ENCODE measurements at regions of chr1 and their contacts with region 1.

Region 1: GRCh38 chr1:151340870-151341754 is 5.9 kb downstream of the RFX5 start:
- DNase-seq: peak; percentile 62
- CTCF ChIP-seq: peak; percentile 64

Region 2: DNA sequence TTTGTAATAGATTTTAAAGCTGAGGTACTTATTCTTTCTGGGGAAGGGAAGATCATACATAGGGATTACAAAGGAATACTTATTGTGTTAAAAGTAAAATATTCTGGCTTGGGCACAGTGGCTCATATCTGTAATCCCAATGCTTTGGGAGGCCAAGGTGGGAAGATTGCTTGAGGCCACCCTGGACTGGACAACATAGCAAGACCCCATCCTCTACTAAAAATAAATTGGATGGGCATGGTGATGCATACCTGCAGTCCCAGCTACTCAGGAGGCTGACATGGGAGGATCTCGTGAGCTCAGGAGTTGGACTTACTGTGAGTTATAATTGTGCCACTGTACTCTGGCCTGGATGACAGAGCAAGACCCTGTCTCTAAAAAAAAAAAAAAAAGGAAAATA is 243.0 kb before region 1 on chr1:
- CTCF ChIA-PET with region 1: interaction called, 12 read pairs
- POLR2A ChIA-PET with region 1: no interaction called
- DNase-seq: no peak
- CTCF ChIP-seq: no peak

Region 3: GRCh38 chr1:151176514-151177055 is 164.5 kb before region 1 on chr1:
- CTCF ChIA-PET with region 1: no interaction called
- POLR2A ChIA-PET with region 1: no interaction called
- DNase-seq: no peak
- CTCF ChIP-seq: no peak

Region 4: GRCh38 chr1:151292207-151293030 is 48.7 kb before region 1 on chr1:
- CTCF ChIA-PET with region 1: interaction called, 83 read pairs
- POLR2A ChIA-PET with region 1: interaction called, 4 read pairs
- DNase-seq: no peak
- CTCF ChIP-seq: no peak

Region 5: GRCh38 chr1:151327223-151327902 is 13.7 kb before region 1 on chr1 and contains the start of gene PI4KB:
- CTCF ChIA-PET with region 1: interaction called, 173 read pairs
- POLR2A ChIA-PET with region 1: interaction called, 6 read pairs
- DNase-seq: peak; percentile 95
- CTCF ChIP-seq: no peak

Region 6: GRCh38 chr1:151399890-151400495 is 58.9 kb after region 1 on chr1:
- CTCF ChIA-PET with region 1: interaction called, 27 read pairs
- POLR2A ChIA-PET with region 1: no interaction called
- DNase-seq: no peak
- CTCF ChIP-seq: no peak

Measured in GM10248 (cell line).